ENCODE measurements at regions of chr11 and their contacts with region 1.

Region 1: GRCh38 chr11:112113539-112114457 is 27.1 kb downstream of the SDHD start:
- DNase-seq: no peak
- H3K4me3 ChIP-seq: no peak overlapping the region
- H3K27ac ChIP-seq: no peak overlapping the region
- H3K4me1 ChIP-seq: no peaks in the 10 kb centered on the region
- H3K27me3 ChIP-seq: no peaks in the 10 kb centered on the region
- CTCF ChIP-seq: peak; percentile 32 to 67 (median 48)
- EP300 ChIP-seq: no peak
- POLR2A ChIP-seq: no peak

Region 2: DNA sequence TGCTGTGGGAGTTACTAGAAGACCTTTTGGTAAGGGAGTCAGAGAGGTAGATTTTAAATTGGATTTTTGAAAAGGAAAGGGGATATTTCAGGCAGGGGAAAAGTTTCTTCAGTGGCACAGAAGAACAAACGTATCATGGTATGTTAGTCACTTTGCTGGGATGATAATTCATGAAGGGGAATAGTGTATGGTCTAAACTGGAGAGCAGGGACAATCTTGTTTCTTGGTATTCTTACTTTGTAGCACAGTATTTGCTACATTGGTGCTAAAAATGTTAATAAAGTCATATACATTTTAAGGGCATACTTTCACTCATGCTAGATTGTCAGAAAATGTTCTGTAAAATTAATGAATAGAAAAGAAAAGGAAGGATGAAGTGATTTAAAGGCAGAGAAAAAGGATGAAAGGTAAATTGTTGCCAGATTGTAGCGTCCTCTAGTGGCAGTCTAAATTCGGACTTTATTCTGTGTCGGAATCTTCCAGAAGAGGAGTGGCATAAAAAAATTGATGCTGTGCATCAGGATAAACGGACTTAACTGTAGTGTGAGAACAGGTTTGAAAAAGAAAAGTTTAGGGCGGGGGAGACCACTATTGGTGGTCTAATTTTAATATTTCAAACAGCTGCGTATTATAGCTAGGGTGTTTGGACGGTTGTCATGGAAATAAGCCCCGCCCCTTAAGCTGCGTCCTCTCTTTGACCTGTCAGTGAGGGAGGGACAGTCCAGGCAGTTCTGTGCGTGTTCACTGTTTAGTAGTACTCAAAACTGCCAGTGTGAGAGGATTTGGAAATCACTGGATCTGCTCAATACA is 61.2 kb after region 1 on chr11 and contains the start of gene BCO2:
- intact Hi-C with region 1: loop called (anchors 2 kb)
- DNase-seq: peak; percentile 94
- H3K4me3 ChIP-seq: peak within 1 kb of the TSS; percentile 14 to 43 (median 36)
- H3K27ac ChIP-seq: peak within 1 kb of the TSS; percentile 67 to 79 (median 74)
- H3K4me1 ChIP-seq: peaks cover 0 to 31% (median 22%) of the 10 kb centered on the region in 4 donors
- H3K27me3 ChIP-seq: no peaks in the 10 kb centered on the region
- CTCF ChIP-seq: peak; percentile 68 to 90 (median 84)
- EP300 ChIP-seq: peak in 1 of 4 donors; percentile 34
- POLR2A ChIP-seq: no peak
- total RNA-seq, gene BCO2: 6.4 to 16.9 (median 7.2) TPM

Region 3: DNA sequence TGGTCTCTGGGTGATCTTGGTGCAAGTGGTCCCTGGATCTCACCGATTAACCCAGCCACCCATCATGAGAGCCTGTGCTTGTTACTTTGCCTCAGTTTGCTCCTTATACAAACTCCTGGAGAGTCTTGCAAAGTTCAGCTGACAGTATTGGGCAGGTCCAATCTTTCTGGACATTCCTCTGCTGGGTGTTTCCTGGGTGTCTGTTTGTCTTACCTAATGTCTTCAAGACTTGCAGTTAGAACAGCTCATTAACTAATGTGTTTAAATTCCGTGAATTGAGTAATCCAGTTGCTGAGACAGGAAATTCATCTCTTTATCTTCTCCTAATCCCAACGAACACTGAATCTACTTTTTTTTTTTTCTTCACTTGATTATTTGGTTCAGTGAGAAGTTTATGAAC is 82.1 kb after region 1 on chr11:
- intact Hi-C with region 1: no loop called
- DNase-seq: no peak
- H3K4me3 ChIP-seq: no peak overlapping the region
- H3K27ac ChIP-seq: no peak overlapping the region
- H3K4me1 ChIP-seq: no peaks in the 10 kb centered on the region
- H3K27me3 ChIP-seq: no peaks in the 10 kb centered on the region
- CTCF ChIP-seq: no peak
- EP300 ChIP-seq: no peak
- POLR2A ChIP-seq: no peak

Region 4: DNA sequence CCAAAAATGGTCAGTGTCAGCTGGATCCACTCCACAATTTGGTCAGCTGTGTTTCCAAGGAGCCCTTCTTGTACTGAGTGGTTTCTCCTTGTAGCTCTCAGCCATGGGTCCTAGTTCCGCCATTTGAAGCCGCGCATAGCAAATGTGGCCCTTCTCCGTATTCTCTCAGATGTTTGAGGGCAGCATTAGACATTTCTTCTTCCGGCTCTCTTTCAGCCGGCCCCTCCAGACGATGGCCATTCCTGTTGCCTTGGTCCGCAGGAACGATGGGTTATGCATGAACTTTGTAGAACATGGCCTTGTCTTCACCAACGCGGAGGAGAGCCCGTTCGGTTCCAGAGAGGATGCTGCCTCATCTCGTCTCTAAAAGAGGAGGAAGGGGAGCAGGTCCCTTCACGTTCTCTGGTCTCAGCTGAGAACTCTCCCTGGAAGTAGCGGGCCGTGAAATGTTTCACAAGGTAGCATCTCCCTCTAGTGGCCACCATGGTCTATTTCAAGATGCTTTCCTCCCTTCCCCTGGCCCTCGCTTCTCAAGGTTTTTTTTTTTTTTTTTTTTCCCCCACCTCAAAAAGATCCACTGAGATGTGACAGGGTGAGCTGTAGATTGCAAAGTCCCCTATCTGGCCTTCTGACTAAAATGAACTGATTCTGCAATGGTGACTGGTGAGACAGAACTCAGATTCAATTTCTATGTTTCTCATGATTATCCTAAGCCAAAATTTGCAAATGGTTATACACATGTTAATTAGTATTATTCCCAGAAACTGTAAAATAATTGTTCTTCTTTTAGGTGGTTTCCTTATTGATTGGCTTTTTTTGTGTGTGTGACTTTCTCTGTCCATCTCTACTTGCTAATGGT is 166.7 kb after region 1 on chr11:
- intact Hi-C with region 1: loop called (anchors 1 kb)
- DNase-seq: peak; percentile 82
- H3K4me3 ChIP-seq: peak overlapping the region; percentile 19 to 55 (median 46)
- H3K27ac ChIP-seq: peak overlapping the region; percentile 33 to 71 (median 54)
- H3K4me1 ChIP-seq: peaks cover 0 to 5% (median 3%) of the 10 kb centered on the region in 4 donors
- H3K27me3 ChIP-seq: no peaks in the 10 kb centered on the region
- CTCF ChIP-seq: peak; percentile 55 to 75 (median 68)
- EP300 ChIP-seq: no peak
- POLR2A ChIP-seq: no peak

Region 5: GRCh38 chr11:112459001-112459400 is 345.2 kb after region 1 on chr11:
- intact Hi-C with region 1: no loop called
- DNase-seq: no peak
- H3K4me3 ChIP-seq: no peak overlapping the region
- H3K27ac ChIP-seq: no peak overlapping the region
- H3K4me1 ChIP-seq: no peaks in the 10 kb centered on the region
- H3K27me3 ChIP-seq: no peaks in the 10 kb centered on the region
- CTCF ChIP-seq: no peak
- EP300 ChIP-seq: no peak
- POLR2A ChIP-seq: no peak